ENCODE measurements at regions of chr12 and their contacts with region 1.

Region 1: DNA sequence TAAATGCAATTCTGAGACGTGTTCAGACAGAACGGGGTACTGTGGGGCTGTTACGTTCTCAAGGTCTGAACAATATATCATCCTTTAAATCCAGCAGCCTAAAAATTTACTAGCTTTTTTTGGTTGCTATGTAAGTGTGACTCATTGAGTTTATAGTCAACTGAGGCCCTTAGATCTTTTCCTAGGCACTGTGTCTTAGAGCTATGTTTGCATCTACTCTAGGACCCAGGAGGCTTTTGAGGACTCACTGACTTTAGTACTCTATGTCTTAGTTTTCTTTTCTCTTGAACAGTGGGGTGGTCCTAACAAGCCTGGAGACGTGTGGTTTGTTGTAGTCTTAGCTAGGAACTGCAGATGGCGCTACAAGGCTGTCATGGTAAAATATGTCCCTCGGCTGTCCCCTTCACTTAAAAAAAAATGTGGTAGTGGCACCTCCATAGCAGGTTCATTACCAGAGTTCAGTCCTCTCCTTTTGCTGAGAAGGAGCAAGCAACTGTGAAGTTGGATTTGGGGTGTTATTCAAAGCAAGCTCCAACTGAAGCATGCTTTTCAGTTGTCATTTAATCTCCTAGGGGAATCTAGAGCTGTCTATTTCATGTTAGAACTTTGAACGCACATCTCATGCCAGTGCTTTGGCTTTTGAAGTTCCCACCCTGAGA is 8.7 kb upstream of the SPATS2 start:
- DNase-seq: peak; percentile 71
- ATAC-seq: peak; percentile 98
- H3K4me3 Mint-ChIP-seq: no peak overlapping the region
- H3K27ac Mint-ChIP-seq: no peak overlapping the region
- H3K4me1 Mint-ChIP-seq: peaks cover 6% of the 10 kb centered on the region
- H3K27me3 Mint-ChIP-seq: peaks cover 24% of the 10 kb centered on the region

Region 2: DNA sequence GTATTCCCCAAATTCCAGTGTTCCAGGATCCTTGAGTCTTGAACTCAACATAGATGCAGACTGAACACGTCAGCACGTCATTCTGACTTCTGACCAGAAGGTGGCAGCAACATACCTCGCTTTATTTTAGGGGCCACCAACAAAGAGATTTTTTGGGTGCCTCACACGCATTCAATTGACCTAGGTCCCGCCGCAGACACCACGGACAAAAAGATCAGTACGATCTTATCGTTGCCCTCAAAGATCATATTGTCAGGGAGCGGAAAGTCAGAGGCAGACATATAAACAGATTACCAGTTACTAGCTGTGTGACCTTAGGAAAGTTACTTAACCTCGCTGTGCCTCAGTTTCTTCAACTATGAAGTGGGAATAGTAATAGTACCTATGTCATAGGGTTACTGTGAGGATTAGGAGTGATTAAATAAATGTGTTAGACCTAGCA is 70.2 kb before region 1 on chr12:
- CTCF ChIA-PET with region 1: interaction called, 168 read pairs
- POLR2A ChIA-PET with region 1: no interaction called
- intact Hi-C with region 1: no loop called
- DNase-seq: peak; percentile 81
- ATAC-seq: peak; percentile 80
- H3K4me3 Mint-ChIP-seq: no peak overlapping the region
- H3K27ac Mint-ChIP-seq: no peak overlapping the region
- H3K4me1 Mint-ChIP-seq: no peaks in the 10 kb centered on the region
- H3K27me3 Mint-ChIP-seq: peaks cover 22% of the 10 kb centered on the region

Region 3: GRCh38 chr12:49331380-49332222 is 27.0 kb before region 1 on chr12:
- CTCF ChIA-PET with region 1: interaction called, 10 read pairs
- POLR2A ChIA-PET with region 1: no interaction called
- intact Hi-C with region 1: no loop called
- DNase-seq: no peak
- ATAC-seq: no peak
- H3K4me3 Mint-ChIP-seq: no peak overlapping the region
- H3K27ac Mint-ChIP-seq: no peak overlapping the region
- H3K4me1 Mint-ChIP-seq: peaks cover 10% of the 10 kb centered on the region
- H3K27me3 Mint-ChIP-seq: peaks cover 37% of the 10 kb centered on the region

Region 4: DNA sequence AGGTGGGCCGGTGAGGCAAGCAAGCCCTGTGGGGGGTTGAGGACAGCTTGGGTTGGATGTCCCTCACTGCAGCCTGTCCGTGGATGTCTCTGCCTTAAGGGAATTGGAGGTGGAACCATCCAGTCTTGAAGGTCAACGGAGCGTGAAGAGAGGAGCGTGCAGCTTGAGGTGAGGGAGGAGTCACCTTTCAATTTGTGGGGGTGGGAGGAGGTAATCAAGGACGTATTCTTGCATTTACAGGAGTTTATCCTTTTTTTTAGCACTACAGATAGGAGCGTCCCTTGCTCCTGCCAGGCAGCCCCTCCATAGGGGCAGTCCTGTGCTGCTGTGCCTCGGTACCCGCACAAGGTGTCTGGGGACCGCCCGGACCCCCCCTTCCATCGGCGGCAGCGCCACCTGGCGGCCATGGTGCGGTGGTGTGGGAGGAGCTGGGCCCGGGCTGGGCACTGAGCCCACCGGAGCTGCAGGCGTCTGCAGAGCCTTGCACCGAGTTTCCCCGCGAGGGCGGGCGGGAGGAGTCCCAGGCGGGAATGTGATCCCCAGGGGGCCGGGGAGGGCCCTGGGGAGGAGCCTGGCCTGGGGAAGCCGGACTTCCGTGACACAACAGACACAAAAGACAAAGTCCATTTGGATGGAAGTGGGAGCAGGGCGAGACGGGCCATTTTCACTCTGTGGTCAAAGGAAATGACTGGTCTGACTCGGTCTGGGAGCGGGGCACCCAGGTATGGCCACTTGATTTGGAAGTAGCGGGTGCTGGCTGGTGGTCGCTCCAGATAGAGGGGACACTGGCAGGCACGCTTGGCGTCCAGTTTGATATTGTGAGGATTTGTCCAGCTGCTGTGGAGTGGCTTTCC is 11.0 kb before region 1 on chr12:
- CTCF ChIA-PET with region 1: interaction called, 54 read pairs
- POLR2A ChIA-PET with region 1: no interaction called
- intact Hi-C with region 1: no loop called
- DNase-seq: peak; percentile 84
- ATAC-seq: peak; percentile 67
- H3K4me3 Mint-ChIP-seq: peak overlapping the region; percentile 29
- H3K27ac Mint-ChIP-seq: no peak overlapping the region
- H3K4me1 Mint-ChIP-seq: peaks cover 39% of the 10 kb centered on the region
- H3K27me3 Mint-ChIP-seq: peaks cover 54% of the 10 kb centered on the region

Region 5: GRCh38 chr12:49470986-49471385 is 112.4 kb after region 1 on chr12:
- CTCF ChIA-PET with region 1: interaction called, 11 read pairs
- POLR2A ChIA-PET with region 1: no interaction called
- intact Hi-C with region 1: no loop called
- DNase-seq: no peak
- ATAC-seq: no peak
- H3K4me3 Mint-ChIP-seq: no peak overlapping the region
- H3K27ac Mint-ChIP-seq: no peak overlapping the region
- H3K4me1 Mint-ChIP-seq: no peaks in the 10 kb centered on the region
- H3K27me3 Mint-ChIP-seq: no peaks in the 10 kb centered on the region

Region 6: DNA sequence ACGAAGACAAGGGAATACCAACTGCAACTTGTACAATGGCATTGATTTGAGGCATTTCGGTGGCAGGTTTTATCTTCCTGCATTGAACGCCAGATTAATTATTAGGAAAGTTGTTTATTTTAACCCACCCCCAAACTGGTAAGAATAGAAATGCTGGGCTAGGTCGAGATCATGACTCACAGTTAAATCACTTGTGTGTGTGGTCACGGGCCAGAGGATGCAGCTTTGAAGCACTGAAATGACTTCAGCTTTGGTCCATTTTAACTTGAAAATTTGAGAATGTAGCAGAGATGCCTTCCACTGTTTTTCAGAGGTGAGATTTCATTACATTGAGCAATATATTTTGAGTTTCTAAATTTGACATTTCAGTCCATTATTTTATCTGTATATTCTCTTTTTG is 156.7 kb after region 1 on chr12:
- CTCF ChIA-PET with region 1: interaction called, 374 read pairs
- POLR2A ChIA-PET with region 1: interaction called, 3 read pairs
- intact Hi-C with region 1: loop called (anchors 1 kb)
- DNase-seq: no peak
- ATAC-seq: no peak
- H3K4me3 Mint-ChIP-seq: no peak overlapping the region
- H3K27ac Mint-ChIP-seq: no peak overlapping the region
- H3K4me1 Mint-ChIP-seq: peaks cover 11% of the 10 kb centered on the region
- H3K27me3 Mint-ChIP-seq: no peaks in the 10 kb centered on the region

Region 7: GRCh38 chr12:49580572-49581535 is 222.2 kb after region 1 on chr12:
- CTCF ChIA-PET with region 1: interaction called, 20 read pairs
- POLR2A ChIA-PET with region 1: no interaction called
- intact Hi-C with region 1: loop called in 1 of 2 experiments (anchors 1 kb)
- DNase-seq: peak; percentile 77
- ATAC-seq: peak; percentile 84
- H3K4me3 Mint-ChIP-seq: no peak overlapping the region
- H3K27ac Mint-ChIP-seq: peak overlapping the region; percentile 68
- H3K4me1 Mint-ChIP-seq: peaks cover 21% of the 10 kb centered on the region
- H3K27me3 Mint-ChIP-seq: no peaks in the 10 kb centered on the region

Measured in activated CD4-positive, alpha-beta T cell treated with anti-CD3 and anti-CD28 coated beads for 36 hours (primary cell).